CD4-positive, alpha-beta memory T cell (primary cell): ENCODE measurements at regions of chr19 and their contacts with region 1.

Region 1: DNA sequence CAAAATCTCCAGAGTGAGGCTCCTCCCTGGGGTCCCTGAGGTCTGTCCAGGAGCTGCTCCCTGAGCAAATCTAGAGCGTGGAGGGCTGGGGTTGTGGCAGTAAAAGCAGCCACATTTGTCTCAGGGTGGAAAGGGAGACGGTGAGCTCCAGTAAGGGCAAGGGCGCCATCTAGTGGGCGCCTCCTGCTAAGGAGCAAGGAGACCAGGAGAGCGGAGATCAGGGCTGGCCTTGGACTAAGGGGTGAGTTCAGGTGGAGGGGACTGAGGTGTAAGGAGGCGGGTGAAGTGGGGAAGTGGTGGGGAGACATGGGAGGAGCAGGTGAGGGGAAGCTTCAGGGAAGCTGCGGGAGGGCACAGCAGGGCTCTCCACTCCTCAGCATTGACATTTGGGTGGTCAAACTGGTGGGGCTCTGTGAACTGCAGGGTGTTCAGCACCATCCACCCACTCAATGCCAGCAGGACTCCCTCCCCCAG is 5.3 kb upstream of the CEACAM21 start:
- DNase-seq: peak; percentile 80 to 83 (median 82)
- H3K4me3 ChIP-seq: no peak overlapping the region
- H3K4me3 Mint-ChIP-seq: peak overlapping the region in 5 of 8 donors; percentile 35 to 74 (median 47)
- H3K27ac ChIP-seq: no peak overlapping the region
- H3K27ac Mint-ChIP-seq: peak overlapping the region; percentile 5 to 87 (median 65)
- H3K4me1 ChIP-seq: peaks cover 43% of the 10 kb centered on the region
- H3K4me1 Mint-ChIP-seq: peaks cover 22 to 59% (median 44%) of the 10 kb centered on the region in 4 donors
- H3K27me3 ChIP-seq: no peaks in the 10 kb centered on the region
- H3K27me3 Mint-ChIP-seq: no peaks in the 10 kb centered on the region

Region 2: GRCh38 chr19:41457241-41457640 is 113.4 kb before region 1 on chr19:
- CTCF ChIA-PET with region 1: interaction called, 10 read pairs
- POLR2A ChIA-PET with region 1: interaction called, 6 read pairs
- intact Hi-C with region 1: no loop called
- DNase-seq: peak in 4 of 5 donors; percentile 20 to 55 (median 38)
- H3K4me3 ChIP-seq: no peak overlapping the region
- H3K4me3 Mint-ChIP-seq: peak overlapping the region in 5 of 8 donors; percentile 12 to 70 (median 38)
- H3K27ac ChIP-seq: no peak overlapping the region
- H3K27ac Mint-ChIP-seq: peak overlapping the region in 5 of 7 donors; percentile 15 to 90 (median 58)
- H3K4me1 ChIP-seq: peaks cover 16% of the 10 kb centered on the region
- H3K4me1 Mint-ChIP-seq: peaks cover 8 to 16% (median 15%) of the 10 kb centered on the region in 4 donors
- H3K27me3 ChIP-seq: no peaks in the 10 kb centered on the region
- H3K27me3 Mint-ChIP-seq: peaks cover 1 to 11% of the 10 kb centered on the region in 2 donors

Region 3: DNA sequence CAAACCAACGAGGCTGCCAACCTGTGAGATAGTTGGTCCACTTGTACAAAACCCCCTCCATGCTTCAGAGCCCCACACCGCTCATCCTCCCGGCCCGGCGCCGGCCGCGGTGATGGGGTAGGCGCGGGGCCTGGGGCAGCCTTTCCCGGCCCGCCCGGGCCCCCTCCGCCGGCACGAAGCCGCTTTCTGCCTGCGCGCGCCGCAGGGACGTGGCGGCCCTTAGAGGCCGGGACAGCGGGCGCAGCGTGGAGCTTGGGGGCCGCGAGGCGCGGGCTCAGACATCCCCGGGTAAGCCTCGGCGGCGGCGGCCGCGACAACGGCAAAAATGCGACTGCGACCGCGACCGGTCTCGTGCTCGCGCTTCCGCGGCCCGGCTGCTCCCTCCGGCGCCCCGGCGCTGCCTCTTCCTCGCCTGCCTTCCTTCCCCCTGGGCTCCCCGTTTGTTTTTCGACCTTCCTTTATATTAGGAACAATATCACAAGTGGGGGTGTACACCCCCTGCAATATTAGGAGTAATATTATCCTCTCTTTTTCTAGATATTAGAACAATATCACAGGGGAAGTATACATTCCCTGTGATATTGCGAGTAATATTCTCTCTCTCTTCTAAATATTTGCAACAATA is 48.6 kb before region 1 on chr19:
- CTCF ChIA-PET with region 1: interaction called, 4 read pairs
- POLR2A ChIA-PET with region 1: interaction called, 4 read pairs
- intact Hi-C with region 1: loop called (anchors 1 kb)
- DNase-seq: peak; percentile 40 to 58 (median 43)
- H3K4me3 ChIP-seq: peak overlapping the region in 1 of 2 donors; percentile 50
- H3K4me3 Mint-ChIP-seq: peak overlapping the region; percentile 82 to 96 (median 90)
- H3K27ac ChIP-seq: peak overlapping the region; percentile 46
- H3K27ac Mint-ChIP-seq: peak overlapping the region; percentile 78 to 95 (median 94)
- H3K4me1 ChIP-seq: peaks cover 13% of the 10 kb centered on the region
- H3K4me1 Mint-ChIP-seq: peaks cover 15 to 28% (median 18%) of the 10 kb centered on the region in 4 donors
- H3K27me3 ChIP-seq: peaks cover 3% of the 10 kb centered on the region
- H3K27me3 Mint-ChIP-seq: peaks cover 5 to 28% of the 10 kb centered on the region in 2 donors

Region 4: DNA sequence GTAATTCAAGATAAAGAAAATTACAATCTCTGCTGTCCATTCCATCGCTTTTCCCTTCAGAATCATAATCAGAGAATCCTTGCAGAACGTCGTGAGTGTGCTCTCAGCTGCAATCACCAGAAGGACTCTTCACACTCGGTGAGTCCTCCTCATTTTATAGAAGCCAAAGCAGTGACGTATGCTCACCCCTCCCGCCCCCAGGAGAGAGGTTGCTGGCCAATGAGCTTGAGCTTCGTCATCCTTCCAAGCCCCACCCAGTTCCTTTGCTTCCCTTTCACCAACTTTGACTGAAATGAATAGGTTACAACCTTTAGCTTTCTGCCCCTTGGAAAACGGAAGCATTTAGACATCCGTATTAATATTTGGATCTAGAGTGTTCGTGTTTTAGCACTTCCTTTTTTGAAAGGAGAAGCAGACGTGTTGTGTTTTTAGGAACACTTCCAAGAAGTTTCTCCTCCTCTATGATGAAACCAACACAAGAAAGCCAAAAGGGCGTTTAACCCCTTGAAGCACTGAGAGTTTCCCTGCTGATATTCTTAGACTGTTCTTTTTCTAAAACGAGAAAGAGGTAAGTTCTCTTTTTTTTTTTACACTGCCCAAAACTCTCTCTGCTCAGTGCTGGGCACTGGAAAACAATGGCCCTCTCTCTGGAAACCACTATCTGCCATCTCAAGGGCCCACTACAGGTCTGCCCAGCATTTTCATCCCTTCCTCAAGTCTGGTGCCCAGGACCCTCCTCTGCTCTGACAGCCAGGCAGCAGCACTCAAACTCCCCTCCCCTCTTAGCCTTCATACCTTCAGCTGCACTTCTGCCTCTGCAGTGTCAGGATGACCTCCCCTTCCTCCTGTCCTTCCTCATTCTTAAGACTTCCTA is 39.0 kb before region 1 on chr19:
- CTCF ChIA-PET with region 1: interaction called, 561 read pairs
- POLR2A ChIA-PET with region 1: interaction called, 547 read pairs
- intact Hi-C with region 1: no loop called
- DNase-seq: peak; percentile 80 to 93 (median 88)
- H3K4me3 ChIP-seq: peak overlapping the region; percentile 30 to 37
- H3K4me3 Mint-ChIP-seq: peak overlapping the region; percentile 77 to 88 (median 86)
- H3K27ac ChIP-seq: peak overlapping the region; percentile 53
- H3K27ac Mint-ChIP-seq: peak overlapping the region; percentile 82 to 98 (median 94)
- H3K4me1 ChIP-seq: peaks cover 53% of the 10 kb centered on the region
- H3K4me1 Mint-ChIP-seq: peaks cover 33 to 60% (median 49%) of the 10 kb centered on the region in 4 donors
- H3K27me3 ChIP-seq: no peaks in the 10 kb centered on the region
- H3K27me3 Mint-ChIP-seq: peaks cover 1 to 3% of the 10 kb centered on the region in 2 donors

Region 5: GRCh38 chr19:41554907-41555306 is 15.8 kb before region 1 on chr19:
- CTCF ChIA-PET with region 1: interaction called, 561 read pairs
- POLR2A ChIA-PET with region 1: interaction called, 547 read pairs
- intact Hi-C with region 1: no loop called
- DNase-seq: peak; percentile 64 to 78 (median 66)
- H3K4me3 ChIP-seq: peak overlapping the region in 1 of 2 donors; percentile 37
- H3K4me3 Mint-ChIP-seq: peak overlapping the region; percentile 56 to 100 (median 98)
- H3K27ac ChIP-seq: peak overlapping the region; percentile 63
- H3K27ac Mint-ChIP-seq: peak overlapping the region; percentile 66 to 95 (median 88)
- H3K4me1 ChIP-seq: peaks cover 72% of the 10 kb centered on the region
- H3K4me1 Mint-ChIP-seq: peaks cover 45 to 84% (median 62%) of the 10 kb centered on the region in 4 donors
- H3K27me3 ChIP-seq: no peaks in the 10 kb centered on the region
- H3K27me3 Mint-ChIP-seq: no peaks in the 10 kb centered on the region

Region 6: GRCh38 chr19:41597600-41598041 is 26.9 kb after region 1 on chr19:
- CTCF ChIA-PET with region 1: interaction called, 59 read pairs
- POLR2A ChIA-PET with region 1: interaction called, 4 read pairs
- intact Hi-C with region 1: loop called (anchors 1 kb)
- DNase-seq: peak; percentile 69 to 77 (median 74)
- H3K4me3 ChIP-seq: no peak overlapping the region
- H3K4me3 Mint-ChIP-seq: peak overlapping the region in 2 of 8 donors; percentile 49 to 76
- H3K27ac ChIP-seq: no peak overlapping the region
- H3K27ac Mint-ChIP-seq: peak overlapping the region in 2 of 7 donors; percentile 59 to 63
- H3K4me1 ChIP-seq: peaks cover 9% of the 10 kb centered on the region
- H3K4me1 Mint-ChIP-seq: peaks cover 7 to 11% (median 11%) of the 10 kb centered on the region in 4 donors
- H3K27me3 ChIP-seq: peaks cover 8% of the 10 kb centered on the region
- H3K27me3 Mint-ChIP-seq: peaks cover 10 to 11% of the 10 kb centered on the region in 2 donors